Panc1 (cell line): ENCODE measurements at regions of chr2 and their contacts with region 1.

Region 1: DNA sequence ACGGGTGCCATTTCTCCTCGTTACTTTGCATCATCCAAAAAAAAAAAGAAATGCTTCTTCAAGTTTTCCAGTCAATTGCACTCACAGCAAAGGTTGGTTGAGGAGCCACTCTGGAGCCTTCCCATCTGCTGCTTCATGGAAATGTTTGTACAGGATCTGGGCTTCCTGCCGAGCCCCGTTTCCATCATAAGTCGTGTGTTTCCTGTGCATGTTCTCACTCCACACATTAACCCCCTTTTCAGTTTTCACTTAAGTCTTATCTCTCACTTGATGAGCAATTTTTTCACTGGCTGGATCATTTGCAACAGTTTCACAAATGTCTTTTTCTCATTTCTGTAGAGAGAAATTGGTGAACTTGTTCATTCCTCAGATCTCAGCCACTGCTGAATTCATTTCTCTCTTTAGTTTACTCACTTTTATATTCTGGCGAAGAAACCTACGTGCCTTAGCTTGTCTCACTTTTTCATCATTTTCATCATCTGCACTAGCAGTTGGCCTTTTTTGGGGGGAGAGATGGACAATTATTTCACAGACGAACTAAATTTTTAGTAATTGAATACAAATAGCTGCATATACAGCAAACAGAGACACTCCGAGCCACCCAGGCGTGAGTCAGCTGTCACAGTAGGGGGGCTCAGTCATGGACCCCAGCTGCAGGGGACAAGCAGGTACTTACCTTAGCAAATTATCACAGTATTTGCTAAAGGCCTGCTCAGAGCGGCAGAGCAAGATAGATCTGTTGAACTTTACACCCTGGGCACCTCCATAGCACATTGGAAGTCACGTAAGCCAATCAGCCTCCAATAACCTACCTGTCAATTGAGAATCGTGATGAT is 750.8 kb upstream of the ID2 start:
- DNase-seq: no peak
- ATAC-seq: no peak
- H3K4me3 ChIP-seq: no peak overlapping the region
- H3K27ac ChIP-seq: no peak overlapping the region
- H3K4me1 ChIP-seq: no peaks in the 10 kb centered on the region
- H3K27me3 ChIP-seq: no peaks in the 10 kb centered on the region
- CTCF ChIP-seq: no peak

Region 2: DNA sequence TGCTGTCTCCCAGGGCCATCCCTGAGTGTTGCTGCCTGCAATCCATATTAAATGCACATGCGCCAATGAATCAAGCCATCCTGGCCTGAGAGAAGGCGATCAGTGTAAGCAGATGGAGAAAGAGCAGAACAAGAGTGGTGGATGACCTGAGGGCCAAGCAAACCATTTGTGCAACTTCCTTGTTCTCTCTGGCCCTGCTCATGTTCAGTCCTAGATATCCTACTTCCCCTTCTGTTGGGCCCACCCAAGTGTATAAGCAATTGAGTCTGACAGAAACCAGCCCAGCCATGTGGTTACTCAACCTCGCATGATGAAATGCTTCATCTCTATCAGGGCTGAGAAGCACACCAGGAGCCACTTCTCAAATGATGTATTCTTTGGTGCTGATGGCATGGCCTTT is 367.8 kb after region 1 on chr2:
- CTCF ChIA-PET with region 1: no interaction called
- POLR2A ChIA-PET with region 1: no interaction called
- in situ Hi-C with region 1: no loop called
- intact Hi-C with region 1: no loop called
- DNase-seq: no peak
- ATAC-seq: no peak
- H3K4me3 ChIP-seq: no peak overlapping the region
- H3K27ac ChIP-seq: no peak overlapping the region
- H3K4me1 ChIP-seq: no peaks in the 10 kb centered on the region; the same call in 1 of the 2 replicates
- H3K27me3 ChIP-seq: peaks cover 3% of the 10 kb centered on the region
- CTCF ChIP-seq: no peak

Region 3: DNA sequence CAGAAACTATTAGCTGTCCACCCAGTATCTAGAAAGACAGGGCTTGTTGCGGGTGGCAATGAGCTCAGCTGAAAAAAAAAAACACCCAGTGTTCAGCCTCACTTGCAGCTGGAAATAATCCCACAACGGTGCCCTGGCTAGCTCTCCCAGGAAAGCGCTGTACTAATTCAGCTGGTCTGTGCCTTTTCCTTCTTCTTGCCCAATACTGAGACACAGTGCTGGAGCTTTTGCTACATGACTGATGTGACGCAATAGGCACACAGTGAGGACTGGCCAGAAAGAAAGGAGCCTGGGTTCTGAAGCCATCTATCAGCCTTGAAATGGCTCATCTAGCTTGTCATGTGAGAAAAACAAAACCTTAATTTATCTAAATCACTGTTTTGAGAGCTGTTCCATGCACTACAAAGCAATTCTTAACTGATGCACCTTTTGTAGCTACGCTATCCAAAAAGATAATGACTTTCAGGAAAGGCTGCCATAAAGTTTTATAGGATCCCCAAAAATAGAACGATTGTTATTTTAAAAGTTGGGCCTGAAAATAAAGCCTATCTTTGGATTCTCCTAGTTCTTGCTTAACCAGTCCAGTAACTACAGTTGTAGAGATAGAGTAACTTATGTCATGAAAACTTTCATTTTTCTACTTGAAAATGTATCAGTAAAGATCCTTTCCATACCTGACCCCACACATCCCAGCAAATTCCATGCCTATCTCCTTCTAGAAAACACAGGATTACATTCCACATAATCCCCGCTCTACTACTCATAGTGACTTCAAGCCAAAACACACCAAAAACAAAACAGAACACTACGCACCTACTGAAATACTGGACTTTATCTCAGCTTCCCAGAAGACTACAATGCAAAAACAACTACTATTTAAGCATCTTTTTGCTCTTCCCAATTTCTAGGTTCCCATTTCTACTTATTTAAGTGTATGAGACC is 890.5 kb after region 1 on chr2:
- CTCF ChIA-PET with region 1: no interaction called
- POLR2A ChIA-PET with region 1: no interaction called
- in situ Hi-C with region 1: no loop called
- intact Hi-C with region 1: loop called (anchors 5 kb)
- DNase-seq: no peak
- ATAC-seq: no peak
- H3K4me3 ChIP-seq: no peak overlapping the region
- H3K27ac ChIP-seq: no peak overlapping the region
- H3K4me1 ChIP-seq: no peaks in the 10 kb centered on the region
- H3K27me3 ChIP-seq: no peaks in the 10 kb centered on the region
- CTCF ChIP-seq: no peak